CD14-positive monocyte (primary cell): ENCODE measurements at regions of chr16 and their contacts with region 1.

Region 1: GRCh38 chr16:10509534-10510025 is 70.8 kb downstream of the EMP2 start:
- DNase-seq: peak; percentile 53 to 74 (median 71)
- H3K4me3 ChIP-seq: no peak overlapping the region
- H3K4me3 Mint-ChIP-seq: no peak overlapping the region
- H3K27ac ChIP-seq: no peak overlapping the region
- H3K27ac Mint-ChIP-seq: no peak overlapping the region
- H3K4me1 ChIP-seq: peaks cover 4 to 5% of the 10 kb centered on the region in 2 donors
- H3K4me1 Mint-ChIP-seq: peaks cover 8% of the 10 kb centered on the region
- H3K27me3 ChIP-seq: no peaks in the 10 kb centered on the region
- H3K27me3 Mint-ChIP-seq: peaks cover 0 to 1% (median 1%) of the 10 kb centered on the region in 3 donors
- CTCF ChIP-seq: peak; percentile 86

Region 2: DNA sequence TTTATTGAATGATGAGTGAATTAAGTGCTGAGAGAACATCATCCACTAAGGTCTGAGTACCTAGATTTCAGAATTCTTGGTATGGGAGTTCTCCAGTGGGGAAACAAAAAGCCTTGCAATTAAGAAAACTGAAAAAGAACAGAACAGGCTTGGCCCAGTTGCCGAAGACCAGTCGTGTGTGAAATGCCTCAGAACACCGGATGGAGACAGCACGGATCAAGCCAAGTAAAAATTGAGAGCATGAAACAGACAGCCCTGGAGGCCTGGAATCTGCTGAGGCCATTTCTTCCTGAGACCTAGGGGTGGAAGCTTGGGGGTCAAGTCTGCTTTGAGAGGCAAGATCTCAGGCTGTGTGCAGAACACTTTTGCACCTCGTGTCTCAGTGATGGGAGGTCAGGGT is 370.7 kb before region 1 on chr16:
- intact Hi-C with region 1: no loop called
- DNase-seq: no peak
- H3K4me3 ChIP-seq: no peak overlapping the region
- H3K4me3 Mint-ChIP-seq: no peak overlapping the region
- H3K27ac ChIP-seq: no peak overlapping the region
- H3K27ac Mint-ChIP-seq: no peak overlapping the region
- H3K4me1 ChIP-seq: no peaks in the 10 kb centered on the region
- H3K4me1 Mint-ChIP-seq: no peaks in the 10 kb centered on the region
- H3K27me3 ChIP-seq: no peaks in the 10 kb centered on the region
- H3K27me3 Mint-ChIP-seq: peaks cover 2 to 3% (median 2%) of the 10 kb centered on the region in 3 donors
- CTCF ChIP-seq: no peak

Region 3: GRCh38 chr16:10405386-10405939 is 104.1 kb before region 1 on chr16:
- intact Hi-C with region 1: no loop called
- DNase-seq: no peak
- H3K4me3 ChIP-seq: no peak overlapping the region
- H3K4me3 Mint-ChIP-seq: no peak overlapping the region
- H3K27ac ChIP-seq: no peak overlapping the region
- H3K27ac Mint-ChIP-seq: no peak overlapping the region
- H3K4me1 ChIP-seq: no peaks in the 10 kb centered on the region
- H3K4me1 Mint-ChIP-seq: no peaks in the 10 kb centered on the region
- H3K27me3 ChIP-seq: no peaks in the 10 kb centered on the region
- H3K27me3 Mint-ChIP-seq: peaks cover 0 to 2% (median 0%) of the 10 kb centered on the region in 3 donors
- CTCF ChIP-seq: no peak

Region 4: GRCh38 chr16:10497132-10498101 is 12.2 kb before region 1 on chr16:
- intact Hi-C with region 1: no loop called
- DNase-seq: no peak
- H3K4me3 ChIP-seq: no peak overlapping the region
- H3K4me3 Mint-ChIP-seq: no peak overlapping the region
- H3K27ac ChIP-seq: no peak overlapping the region
- H3K27ac Mint-ChIP-seq: no peak overlapping the region
- H3K4me1 ChIP-seq: no peaks in the 10 kb centered on the region
- H3K4me1 Mint-ChIP-seq: no peaks in the 10 kb centered on the region
- H3K27me3 ChIP-seq: no peaks in the 10 kb centered on the region
- H3K27me3 Mint-ChIP-seq: no peaks in the 10 kb centered on the region
- CTCF ChIP-seq: no peak

Region 5: DNA sequence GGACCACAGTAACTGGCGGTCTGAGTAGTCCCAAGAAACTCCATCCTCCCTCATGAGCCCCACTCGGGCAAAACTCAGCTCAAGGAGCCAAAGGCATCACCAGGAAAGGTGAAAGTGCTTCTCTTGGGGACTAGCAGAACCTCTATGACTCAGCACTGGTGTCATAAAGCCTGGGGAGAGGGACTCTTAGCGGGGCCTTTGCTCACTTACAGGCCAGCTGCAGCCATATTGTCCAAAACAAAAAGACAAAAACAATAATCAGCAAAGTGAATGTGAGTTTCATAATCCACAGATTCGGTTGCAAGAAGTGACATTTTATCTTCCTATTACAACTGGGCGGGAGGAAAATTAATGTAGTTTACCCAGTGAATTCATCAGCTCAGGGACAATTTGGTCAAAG is 185.2 kb after region 1 on chr16 and contains the start of gene TEKT5:
- intact Hi-C with region 1: no loop called
- DNase-seq: no peak
- H3K4me3 ChIP-seq: no peak within 1 kb of the TSS
- H3K4me3 Mint-ChIP-seq: no peak within 1 kb of the TSS
- H3K27ac ChIP-seq: no peak within 1 kb of the TSS
- H3K27ac Mint-ChIP-seq: peak within 1 kb of the TSS in 2 of 7 donors; percentile 41 to 64
- H3K4me1 ChIP-seq: no peaks in the 10 kb centered on the region
- H3K4me1 Mint-ChIP-seq: no peaks in the 10 kb centered on the region
- H3K27me3 ChIP-seq: no peaks in the 10 kb centered on the region
- H3K27me3 Mint-ChIP-seq: peaks cover 1 to 3% (median 2%) of the 10 kb centered on the region in 3 donors
- CTCF ChIP-seq: no peak
- polyA plus RNA-seq, gene TEKT5: 0.16 TPM in 1 of 3 donors, not detected in the others

Region 6: GRCh38 chr16:10737068-10737625 is 227.6 kb after region 1 on chr16:
- intact Hi-C with region 1: loop called (anchors 2 kb)
- DNase-seq: peak; percentile 65 to 78 (median 73)
- H3K4me3 ChIP-seq: peak overlapping the region in 1 of 3 experiments; percentile 56
- H3K4me3 Mint-ChIP-seq: peak overlapping the region; percentile 64 to 76
- H3K27ac ChIP-seq: peak overlapping the region in 1 of 2 donors; percentile 54
- H3K27ac Mint-ChIP-seq: peak overlapping the region in 6 of 7 donors; percentile 35 to 93 (median 82)
- H3K4me1 ChIP-seq: peaks cover 24 to 26% of the 10 kb centered on the region in 2 donors
- H3K4me1 Mint-ChIP-seq: peaks cover 20% of the 10 kb centered on the region
- H3K27me3 ChIP-seq: no peaks in the 10 kb centered on the region
- H3K27me3 Mint-ChIP-seq: peaks cover 0 to 5% (median 2%) of the 10 kb centered on the region in 3 donors
- CTCF ChIP-seq: peak; percentile 95

Region 7: GRCh38 chr16:10918294-10919002 is 408.9 kb after region 1 on chr16:
- intact Hi-C with region 1: loop called in 1 of 2 experiments (anchors 2 kb)
- DNase-seq: peak; percentile 80 to 89 (median 82)
- H3K4me3 ChIP-seq: no peak overlapping the region
- H3K4me3 Mint-ChIP-seq: no peak overlapping the region
- H3K27ac ChIP-seq: peak overlapping the region in 1 of 2 donors; percentile 60
- H3K27ac Mint-ChIP-seq: peak overlapping the region in 5 of 7 donors; percentile 16 to 79 (median 70)
- H3K4me1 ChIP-seq: peaks cover 9 to 14% of the 10 kb centered on the region in 2 donors
- H3K4me1 Mint-ChIP-seq: peaks cover 17% of the 10 kb centered on the region
- H3K27me3 ChIP-seq: no peaks in the 10 kb centered on the region
- H3K27me3 Mint-ChIP-seq: no peaks in the 10 kb centered on the region
- CTCF ChIP-seq: peak; percentile 90